T-cell (primary cell): ENCODE measurements at regions of chr20 and their contacts with region 1.

Region 1: DNA sequence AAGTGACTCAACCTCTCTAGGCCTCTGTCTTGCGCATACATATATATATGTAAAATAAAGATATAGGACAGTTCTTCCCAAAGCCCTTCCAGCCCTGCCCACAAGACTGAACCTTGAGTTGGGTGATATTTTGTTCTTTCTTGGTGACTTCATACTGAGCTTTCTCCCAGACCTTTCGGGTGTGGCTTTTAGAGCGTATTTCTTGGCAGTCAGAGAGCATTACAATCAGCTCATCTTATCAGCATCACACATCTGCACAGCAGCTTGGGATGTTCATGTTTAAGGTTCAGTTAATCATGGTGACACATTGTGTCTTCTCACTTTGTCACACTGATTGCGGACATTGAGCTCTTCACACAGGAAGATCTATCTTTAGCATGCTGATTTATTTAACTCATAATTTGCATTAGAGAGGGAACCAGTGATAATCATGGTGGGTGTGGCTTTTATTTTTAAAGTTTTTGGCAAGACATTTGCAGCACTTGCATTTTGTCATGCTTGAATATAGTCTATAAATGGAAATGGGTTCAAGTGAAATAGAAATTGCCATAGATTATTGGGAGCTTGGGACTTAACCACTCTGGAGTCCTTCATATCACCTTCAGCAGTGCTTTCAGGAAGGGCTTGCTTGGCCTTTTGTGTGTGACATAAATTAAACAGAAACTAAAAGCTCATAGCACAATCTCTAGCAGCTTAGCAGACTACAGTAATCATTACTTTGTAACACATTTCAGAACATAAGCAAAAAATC is 8.3 kb downstream of the KIF3B start:
- DNase-seq: peak in 20 of 35 experiments; percentile 2 to 66 (median 18)
- ATAC-seq: peak; percentile 69 to 82 (median 78)
- H3K4me3 ChIP-seq: no peak overlapping the region
- H3K4me3 Mint-ChIP-seq: peak overlapping the region; percentile 3 to 41 (median 38)
- H3K27ac ChIP-seq: peak overlapping the region; percentile 76
- H3K27ac Mint-ChIP-seq: peak overlapping the region; percentile 76 to 79
- H3K4me1 ChIP-seq: peaks cover 7 to 33% of the 10 kb centered on the region in 2 experiments
- H3K4me1 Mint-ChIP-seq: peaks cover 33 to 55% (median 48%) of the 10 kb centered on the region in 3 donors
- H3K27me3 ChIP-seq: no peaks in the 10 kb centered on the region
- H3K27me3 Mint-ChIP-seq: no peaks in the 10 kb centered on the region

Region 2: GRCh38 chr20:32241807-32242206 is 44.0 kb before region 1 on chr20:
- CTCF ChIA-PET with region 1: no interaction called
- POLR2A ChIA-PET with region 1: interaction called in 1 of 2 experiments, 13 read pairs
- DNase-seq: no peak
- ATAC-seq: no peak
- H3K4me3 ChIP-seq: no peak overlapping the region
- H3K4me3 Mint-ChIP-seq: no peak overlapping the region
- H3K27ac ChIP-seq: no peak overlapping the region
- H3K27ac Mint-ChIP-seq: no peak overlapping the region
- H3K4me1 ChIP-seq: no peaks in the 10 kb centered on the region
- H3K4me1 Mint-ChIP-seq: peaks cover 0 to 3% (median 0%) of the 10 kb centered on the region in 3 donors
- H3K27me3 ChIP-seq: no peaks in the 10 kb centered on the region
- H3K27me3 Mint-ChIP-seq: no peaks in the 10 kb centered on the region

Region 3: GRCh38 chr20:32387252-32387651 is 101.5 kb after region 1 on chr20:
- CTCF ChIA-PET with region 1: no interaction called
- POLR2A ChIA-PET with region 1: interaction called in 1 of 2 experiments, 13 read pairs
- DNase-seq: peak in 29 of 35 experiments; percentile 5 to 79 (median 36)
- ATAC-seq: peak; percentile 93 to 99 (median 98)
- H3K4me3 ChIP-seq: no peak overlapping the region
- H3K4me3 Mint-ChIP-seq: peak overlapping the region in 1 of 3 donors; percentile 52
- H3K27ac ChIP-seq: peak overlapping the region; percentile 21
- H3K27ac Mint-ChIP-seq: peak overlapping the region; percentile 1 to 18
- H3K4me1 ChIP-seq: peaks cover 33 to 44% of the 10 kb centered on the region in 2 experiments
- H3K4me1 Mint-ChIP-seq: peaks cover 70 to 75% (median 74%) of the 10 kb centered on the region in 3 donors
- H3K27me3 ChIP-seq: no peaks in the 10 kb centered on the region
- H3K27me3 Mint-ChIP-seq: no peaks in the 10 kb centered on the region